H1 (cell line): ENCODE measurements at regions of chr21 and their contacts with region 1.

Region 1: DNA sequence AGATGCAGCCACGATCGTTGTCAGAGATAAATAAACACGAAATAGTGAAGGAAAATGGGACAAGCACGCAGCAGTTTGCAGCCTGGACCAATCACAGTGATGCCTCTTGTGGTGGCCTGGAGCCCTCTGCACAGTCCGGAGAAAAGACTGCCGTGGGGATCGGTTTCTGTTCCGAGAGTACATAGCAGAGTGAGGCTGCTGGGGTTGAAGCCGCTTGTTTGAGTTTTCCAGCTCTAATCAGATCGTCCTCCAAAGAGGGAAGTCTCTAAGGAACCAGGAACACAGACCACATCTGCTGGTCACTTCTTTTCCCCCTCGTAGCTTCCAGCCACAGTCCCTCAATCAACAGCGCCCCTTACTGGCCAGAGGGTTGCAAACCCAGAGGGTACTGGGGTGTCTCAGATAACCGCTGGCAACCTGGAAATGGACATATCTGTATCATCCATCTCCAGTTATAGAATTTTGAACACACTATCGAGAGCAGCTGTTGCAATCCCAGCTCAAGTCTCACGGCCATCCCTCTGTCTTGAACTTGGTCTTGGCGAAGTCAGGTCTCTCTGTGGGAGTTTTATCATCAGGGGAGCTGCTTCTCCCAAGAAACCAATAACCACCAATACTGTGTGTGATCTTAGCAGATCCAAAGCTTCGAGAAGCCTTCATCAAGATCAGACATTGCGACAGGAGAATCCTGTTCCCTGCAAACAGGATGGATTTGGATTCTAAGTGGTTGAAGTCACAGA is 57.4 kb downstream of the OLIG1 start:
- DNase-seq: peak in 1 of 2 experiments; percentile 90
- H3K4me3 ChIP-seq: peak overlapping the region in 2 of 4 experiments; percentile 17 to 42; a peak in 5 of 8 replicates
- H3K27ac ChIP-seq: no peak overlapping the region
- H3K4me1 ChIP-seq: peaks cover 7 to 17% (median 10%) of the 10 kb centered on the region in 4 experiments; a peak in 6 of 7 replicates
- H3K27me3 ChIP-seq: peaks cover 0 to 6% (median 1%) of the 10 kb centered on the region in 4 experiments; a peak in 3 of 7 replicates
- CTCF ChIP-seq: peak; percentile 83 to 95 (median 93)
- EP300 ChIP-seq: no peak
- POLR2A ChIP-seq: no peak
- RAD21 ChIP-seq: peak; percentile 97 to 99

Region 2: GRCh38 chr21:32949701-32950100 is 177.6 kb before region 1 on chr21:
- CTCF ChIA-PET with region 1: interaction called, 11 read pairs
- POLR2A ChIA-PET with region 1: no interaction called
- DNase-seq: no peak
- H3K4me3 ChIP-seq: no peak overlapping the region
- H3K27ac ChIP-seq: no peak overlapping the region
- H3K4me1 ChIP-seq: peaks cover 1 to 9% (median 7%) of the 10 kb centered on the region in 4 experiments; a peak in 4 of 7 replicates
- H3K27me3 ChIP-seq: no peaks in the 10 kb centered on the region
- CTCF ChIP-seq: no peak
- EP300 ChIP-seq: no peak
- POLR2A ChIP-seq: no peak
- RAD21 ChIP-seq: no peak

Region 3: DNA sequence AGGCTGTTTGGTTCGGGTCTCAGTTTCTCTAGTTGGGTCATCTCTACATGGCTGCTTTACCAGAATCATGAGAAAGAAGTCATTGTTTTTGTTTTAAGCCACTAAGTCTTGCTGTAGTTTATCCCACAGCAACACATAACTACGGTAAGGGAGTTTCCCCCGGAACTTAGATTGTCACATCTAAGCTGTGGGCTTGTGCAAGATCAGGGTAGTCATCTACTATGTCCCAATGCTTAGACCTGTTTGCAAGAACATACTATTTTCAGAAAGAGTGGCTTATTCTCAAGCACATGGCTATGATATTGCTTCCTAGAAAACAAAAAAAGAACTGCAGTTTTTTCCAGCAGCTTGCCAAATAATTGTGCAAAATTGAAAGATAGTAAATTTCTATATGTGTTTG is 119.6 kb before region 1 on chr21:
- CTCF ChIA-PET with region 1: interaction called, 18 read pairs
- POLR2A ChIA-PET with region 1: no interaction called
- DNase-seq: no peak
- H3K4me3 ChIP-seq: no peak overlapping the region
- H3K27ac ChIP-seq: no peak overlapping the region
- H3K4me1 ChIP-seq: no peaks in the 10 kb centered on the region; a peak in 1 of 7 replicates
- H3K27me3 ChIP-seq: peaks cover 0 to 2% (median 0%) of the 10 kb centered on the region in 4 experiments; a peak in 1 of 7 replicates
- CTCF ChIP-seq: no peak
- EP300 ChIP-seq: no peak
- POLR2A ChIP-seq: no peak
- RAD21 ChIP-seq: no peak

Region 4: GRCh38 chr21:33096426-33096825 is 30.9 kb before region 1 on chr21:
- CTCF ChIA-PET with region 1: interaction called, 10 read pairs
- POLR2A ChIA-PET with region 1: no interaction called
- DNase-seq: no peak
- H3K4me3 ChIP-seq: no peak overlapping the region
- H3K27ac ChIP-seq: no peak overlapping the region
- H3K4me1 ChIP-seq: peaks cover 3 to 9% (median 3%) of the 10 kb centered on the region in 4 experiments; a peak in 4 of 7 replicates
- H3K27me3 ChIP-seq: no peaks in the 10 kb centered on the region
- CTCF ChIP-seq: no peak
- EP300 ChIP-seq: no peak
- POLR2A ChIP-seq: no peak
- RAD21 ChIP-seq: no peak

Region 5: GRCh38 chr21:33261635-33262034 is 134.3 kb after region 1 on chr21:
- CTCF ChIA-PET with region 1: no interaction called
- POLR2A ChIA-PET with region 1: no interaction called
- DNase-seq: no peak
- H3K4me3 ChIP-seq: no peak overlapping the region
- H3K27ac ChIP-seq: no peak overlapping the region
- H3K4me1 ChIP-seq: no peaks in the 10 kb centered on the region
- H3K27me3 ChIP-seq: no peaks in the 10 kb centered on the region
- CTCF ChIP-seq: no peak
- EP300 ChIP-seq: no peak
- POLR2A ChIP-seq: no peak
- RAD21 ChIP-seq: no peak